Left cardiac atrium (tissue), 4 donors: ENCODE measurements at regions of chr1 and their contacts with region 1.

Region 1: DNA sequence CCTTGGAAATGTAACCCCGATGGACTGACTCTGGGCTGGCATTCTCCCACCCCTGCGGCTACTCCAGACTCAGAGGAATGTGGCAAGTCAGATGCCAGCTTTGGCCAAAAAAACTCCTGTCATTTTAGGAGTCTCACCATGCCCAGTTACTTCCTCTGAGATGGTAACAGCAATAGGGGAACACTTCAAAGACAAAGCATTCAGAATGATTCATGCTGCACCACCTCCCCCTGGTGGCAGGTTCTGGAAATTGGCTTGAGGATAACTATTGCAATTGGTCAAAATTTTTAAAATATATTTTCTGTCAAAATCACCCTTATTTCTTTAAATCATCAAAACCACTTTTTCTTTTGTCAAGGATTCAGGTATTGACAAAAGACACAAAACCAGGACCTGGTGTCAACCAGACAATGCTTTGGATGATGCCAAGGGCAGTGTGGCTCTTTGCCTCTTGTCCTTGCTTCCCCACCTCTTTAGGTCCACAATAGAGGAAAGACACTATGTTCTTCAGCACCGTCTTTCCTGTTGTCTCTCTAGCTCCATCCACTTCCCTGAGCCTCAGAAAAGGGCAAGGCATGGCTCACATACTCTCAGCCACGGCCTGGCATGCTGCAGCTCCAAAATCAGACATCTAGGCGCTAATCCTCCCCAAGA is 9.9 kb upstream of the CDCA8 start:
- DNase-seq: peak; percentile 68
- ATAC-seq: peak; percentile 57 to 74

Region 2: DNA sequence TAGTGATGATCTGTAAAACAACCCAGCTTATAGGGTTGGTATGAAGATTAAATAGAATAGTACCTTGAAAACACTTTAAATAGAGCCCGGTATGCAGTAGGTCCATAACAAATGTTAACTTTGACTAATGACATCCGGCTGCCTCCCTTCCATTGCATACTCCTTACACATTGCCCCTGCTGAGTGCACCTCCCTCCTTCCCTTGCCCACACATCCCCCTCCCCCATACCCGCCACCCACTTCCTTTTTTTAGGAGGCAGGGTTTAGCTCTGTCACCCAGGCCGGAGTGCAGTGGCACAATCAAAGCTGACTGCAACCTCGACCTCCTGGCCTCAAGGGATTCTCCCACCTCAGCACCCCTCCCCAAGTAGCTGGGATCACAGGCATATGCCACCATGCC is 232.5 kb before region 1 on chr1:
- intact Hi-C with region 1: loop called (anchors 5 to 10 kb)
- DNase-seq: no peak
- ATAC-seq: no peak

Region 3: GRCh38 chr1:37602750-37603694 is 79.4 kb before region 1 on chr1:
- intact Hi-C with region 1: loop called (anchors 5 to 10 kb)
- DNase-seq: no peak
- ATAC-seq: no peak

Region 4: DNA sequence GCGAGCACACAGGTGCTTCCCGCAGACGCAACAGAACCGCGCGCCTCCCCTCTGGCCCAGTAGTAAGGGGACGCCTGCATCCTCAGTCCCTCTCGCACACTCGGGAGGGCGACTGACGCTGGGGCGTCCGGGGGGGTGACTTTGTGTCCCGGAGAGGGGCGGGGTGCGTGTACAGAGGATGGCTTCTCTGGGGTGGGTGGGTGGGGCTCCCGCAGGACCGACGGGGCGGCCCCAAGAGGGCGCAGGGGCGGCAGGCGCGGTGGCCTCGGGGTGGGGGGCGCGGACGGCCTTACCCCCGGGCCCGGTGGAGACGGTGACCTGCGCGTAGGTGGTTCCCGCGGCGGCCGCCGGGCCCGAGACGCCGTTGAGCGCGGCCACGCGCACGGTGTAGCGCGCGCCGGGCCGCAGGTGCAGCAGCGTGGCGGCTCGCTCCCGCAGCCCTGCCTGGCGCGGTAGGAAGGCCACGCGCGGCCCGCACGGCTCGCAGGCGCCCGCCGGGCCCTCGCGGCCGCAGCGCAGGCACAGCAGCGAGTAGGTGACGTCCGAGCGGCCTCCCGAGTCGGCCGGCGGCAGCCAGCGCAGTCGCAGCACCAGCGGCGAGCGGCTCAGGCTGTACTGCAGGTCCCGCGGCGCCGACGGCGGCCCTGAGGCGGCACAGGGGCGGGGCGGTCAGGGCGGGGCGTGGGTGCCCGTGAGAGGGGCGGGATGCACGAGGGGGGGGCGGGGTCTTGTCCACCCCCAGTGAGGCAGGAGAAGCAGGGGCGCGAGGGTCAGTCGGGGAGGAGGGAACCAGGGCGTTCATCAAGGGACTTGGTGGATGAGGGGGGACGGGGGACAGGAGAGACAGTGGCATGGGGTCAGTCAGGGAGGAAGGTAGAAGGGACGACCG is 70.4 kb after region 1 on chr1:
- intact Hi-C with region 1: no loop called
- DNase-seq: no peak
- ATAC-seq: peak; percentile 18 to 41